ENCODE measurements at regions of chr2 and their contacts with region 1.

Region 1: GRCh38 chr2:190408538-190409271 is 550 bp downstream of the MFSD6 start:
- DNase-seq: peak; percentile 71
- H3K4me3 Mint-ChIP-seq: peak overlapping the region; percentile 84
- H3K27ac Mint-ChIP-seq: peak overlapping the region; percentile 90
- H3K4me1 Mint-ChIP-seq: peaks cover 46% of the 10 kb centered on the region
- H3K27me3 Mint-ChIP-seq: no peaks in the 10 kb centered on the region

Region 2: GRCh38 chr2:190376591-190377245 is 32.0 kb before region 1 on chr2:
- CTCF ChIA-PET with region 1: no interaction called
- intact Hi-C with region 1: no loop called
- DNase-seq: no peak
- H3K4me3 Mint-ChIP-seq: no peak overlapping the region
- H3K27ac Mint-ChIP-seq: no peak overlapping the region
- H3K4me1 Mint-ChIP-seq: no peaks in the 10 kb centered on the region
- H3K27me3 Mint-ChIP-seq: no peaks in the 10 kb centered on the region

Region 3: DNA sequence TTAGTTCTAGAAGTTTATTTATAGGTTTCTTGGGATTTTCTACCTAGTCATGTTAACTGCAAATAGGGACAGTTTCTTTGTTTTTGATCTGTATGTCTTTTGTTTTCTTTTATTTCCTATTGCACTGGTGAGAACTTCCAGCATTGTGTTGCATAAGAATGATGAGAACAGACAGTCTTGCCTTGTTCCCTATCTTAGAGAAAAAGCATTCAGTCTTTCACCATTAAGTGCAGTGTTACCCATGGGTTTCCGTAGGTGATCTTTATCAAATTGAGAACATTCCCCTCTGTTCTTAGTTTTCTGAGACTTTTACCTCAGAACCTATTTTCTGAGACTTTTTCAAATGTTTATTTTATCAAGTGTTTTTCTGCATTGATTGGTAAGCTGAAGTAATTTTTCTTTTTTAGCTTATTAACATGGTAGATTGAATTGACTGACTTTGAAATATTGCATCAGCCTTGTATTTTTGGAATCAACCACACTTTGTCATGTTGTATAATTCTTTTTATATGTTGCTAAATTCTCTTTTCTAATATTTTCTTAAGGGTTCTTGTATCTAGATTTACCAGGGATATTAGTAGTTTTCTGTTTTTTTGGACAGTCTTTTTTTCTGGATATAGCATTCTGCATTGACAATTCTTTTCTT is 16.6 kb after region 1 on chr2:
- CTCF ChIA-PET with region 1: no interaction called
- intact Hi-C with region 1: loop called (anchors 1 kb)
- DNase-seq: no peak
- H3K4me3 Mint-ChIP-seq: no peak overlapping the region
- H3K27ac Mint-ChIP-seq: peak overlapping the region; percentile 62
- H3K4me1 Mint-ChIP-seq: peaks cover 58% of the 10 kb centered on the region
- H3K27me3 Mint-ChIP-seq: no peaks in the 10 kb centered on the region

Region 4: DNA sequence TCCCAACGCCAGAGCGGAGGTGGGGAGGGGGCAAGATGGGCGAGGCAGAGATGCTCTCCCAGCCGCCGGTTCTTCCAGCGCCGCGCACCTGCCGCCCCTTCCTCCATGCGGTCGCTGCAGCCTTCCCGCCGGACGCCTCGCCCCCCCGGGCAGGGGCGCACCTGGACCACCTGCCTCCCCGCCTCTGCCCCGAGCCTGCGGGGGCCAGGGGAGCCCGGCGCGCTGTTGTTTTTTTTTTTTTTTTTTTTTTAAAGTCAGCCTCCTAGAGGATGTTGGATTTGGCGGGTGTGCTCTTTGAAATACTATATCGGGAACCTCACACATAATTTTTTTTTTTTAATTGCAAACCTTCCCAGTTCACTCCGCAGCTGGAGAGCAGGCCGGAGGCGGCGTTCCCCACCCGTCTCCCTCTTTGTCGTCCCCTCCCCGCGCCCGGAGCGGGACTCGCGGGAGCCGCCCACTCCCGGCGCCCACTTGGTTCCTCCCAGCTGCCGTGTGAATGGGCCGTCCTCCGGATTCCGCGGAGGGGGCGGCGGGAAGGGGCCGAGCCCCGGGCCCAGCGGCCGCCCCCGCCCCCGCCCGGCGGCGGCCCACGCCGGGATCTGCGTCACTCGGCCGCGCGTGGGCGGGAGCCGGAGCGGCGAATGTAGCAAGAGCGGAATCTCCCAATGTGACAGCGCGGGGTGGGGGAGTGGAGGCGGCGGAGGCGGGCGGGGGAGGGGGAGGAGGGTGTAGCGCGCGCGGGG is 239.8 kb after region 1 on chr2:
- CTCF ChIA-PET with region 1: no interaction called
- intact Hi-C with region 1: loop called (anchors 1 kb)
- DNase-seq: peak; percentile 81
- H3K4me3 Mint-ChIP-seq: peak overlapping the region; percentile 68
- H3K27ac Mint-ChIP-seq: peak overlapping the region; percentile 76
- H3K4me1 Mint-ChIP-seq: peaks cover 43% of the 10 kb centered on the region
- H3K27me3 Mint-ChIP-seq: no peaks in the 10 kb centered on the region